HepG2 (cell line): ENCODE measurements at regions of chr19 and their contacts with region 1.

Region 1: DNA sequence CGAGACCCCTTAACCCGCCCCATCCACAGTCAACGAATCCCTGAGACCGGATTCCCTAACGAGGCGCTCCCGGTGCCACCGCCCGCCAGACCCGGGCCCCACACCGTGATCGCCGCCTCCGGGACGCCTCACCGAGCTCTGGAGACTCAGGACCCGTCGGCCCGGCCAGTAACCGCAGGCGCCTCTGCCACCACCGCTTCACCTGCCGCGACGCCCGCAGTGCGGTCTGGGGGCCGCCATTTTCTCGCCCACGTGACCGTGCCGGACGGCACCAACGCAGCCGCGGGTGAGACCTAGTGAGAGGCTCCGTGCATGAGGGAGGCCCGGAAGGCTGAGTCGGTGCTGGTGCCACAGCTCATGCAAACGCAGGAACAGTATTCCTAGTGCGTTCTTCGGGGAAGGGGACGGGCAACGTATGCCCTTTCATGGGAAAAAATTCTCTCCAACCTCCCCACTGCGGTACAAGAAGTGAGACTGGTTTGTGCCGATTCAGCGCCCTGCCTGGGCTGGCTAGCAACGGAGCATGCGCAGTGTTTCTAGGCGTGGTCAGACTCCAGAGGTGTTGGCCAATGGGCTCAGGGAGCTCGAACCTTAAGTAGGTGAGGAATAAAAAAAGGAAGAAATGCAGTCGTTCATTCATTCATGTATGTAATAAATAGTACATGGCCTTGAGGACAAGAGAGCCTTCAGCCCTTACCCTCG is at the start of gene DOHH:
- DNase-seq: peak; percentile 94
- ATAC-seq: peak; percentile 88
- H3K4me3 ChIP-seq: peak within 1 kb of the TSS; percentile 82 to 97 (median 89)
- H3K27ac ChIP-seq: peak within 1 kb of the TSS; percentile 97
- H3K4me1 ChIP-seq: peaks cover 69% of the 10 kb centered on the region
- H3K27me3 ChIP-seq: no peaks in the 10 kb centered on the region; a peak in 2 of 5 replicates
- CTCF ChIP-seq: no peak
- EP300 ChIP-seq: peak in 1 of 2 experiments; percentile 5; a peak in 1 of 4 replicates
- POLR2A ChIP-seq: peak; percentile 81 to 83
- RAD21 ChIP-seq: peak; percentile 33; the same call in 1 of the 2 replicates
- total RNA-seq, gene DOHH: 10.3 and 13.7 TPM in 2 replicates

Region 2: GRCh38 chr19:3479177-3479833 is 21.3 kb before region 1 on chr19:
- CTCF ChIA-PET with region 1: no interaction called
- POLR2A ChIA-PET with region 1: interaction called, 24 read pairs
- in situ Hi-C with region 1: no loop called
- intact Hi-C with region 1: no loop called
- DNase-seq: no peak
- ATAC-seq: no peak
- H3K4me3 ChIP-seq: no peak overlapping the region
- H3K27ac ChIP-seq: no peak overlapping the region
- H3K4me1 ChIP-seq: peaks cover 22% of the 10 kb centered on the region
- H3K27me3 ChIP-seq: no peaks in the 10 kb centered on the region
- CTCF ChIP-seq: no peak
- EP300 ChIP-seq: no peak
- POLR2A ChIP-seq: no peak
- RAD21 ChIP-seq: no peak

Region 3: DNA sequence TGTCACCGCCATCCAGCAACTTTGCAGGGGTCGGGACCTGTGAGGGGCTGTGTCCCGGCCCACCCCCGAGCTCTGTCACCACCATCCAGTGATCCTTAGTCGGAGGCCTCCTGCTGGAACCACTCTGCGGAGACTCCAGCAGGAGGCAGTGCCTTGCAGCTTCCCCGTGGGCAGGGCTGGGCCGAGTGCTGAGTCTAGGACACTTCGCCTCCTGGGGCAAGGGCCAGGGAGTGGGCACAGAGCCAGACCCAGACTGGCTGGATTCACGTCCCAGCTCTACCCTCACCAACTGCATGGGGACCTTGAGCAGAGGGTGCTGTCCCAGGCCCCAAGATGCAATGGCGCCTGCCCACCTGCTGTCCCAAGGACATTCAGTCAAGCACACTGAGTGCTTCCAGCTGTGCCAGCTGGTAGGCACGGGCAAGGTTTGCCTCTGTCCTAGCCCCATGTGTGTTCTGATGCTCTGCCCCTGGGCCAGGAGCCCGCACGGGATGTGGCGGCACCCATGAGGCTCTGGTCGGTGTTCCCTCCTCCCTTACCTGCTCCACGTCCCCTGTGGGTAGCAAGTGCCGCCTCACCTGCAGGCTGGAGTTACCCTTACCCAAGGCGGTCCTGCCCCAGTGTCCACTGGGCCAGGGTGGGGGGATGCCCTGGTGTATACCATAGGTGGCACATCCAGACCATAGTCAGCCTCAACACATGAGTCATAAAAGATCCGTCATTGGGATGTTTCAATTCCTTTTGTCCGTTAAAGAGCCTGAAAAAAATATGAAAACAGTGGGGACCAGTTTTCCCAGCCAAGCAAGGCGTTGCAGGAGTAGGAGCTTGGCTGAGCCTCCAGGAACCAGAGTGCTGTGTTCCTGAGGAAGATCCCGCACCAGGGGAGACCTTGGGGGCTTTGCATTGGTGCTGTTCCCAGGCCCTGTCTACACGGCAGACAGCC is 12.9 kb after region 1 on chr19:
- CTCF ChIA-PET with region 1: no interaction called
- POLR2A ChIA-PET with region 1: no interaction called
- in situ Hi-C with region 1: no loop called
- intact Hi-C with region 1: no loop called
- DNase-seq: no peak
- ATAC-seq: no peak
- H3K4me3 ChIP-seq: no peak overlapping the region
- H3K27ac ChIP-seq: no peak overlapping the region
- H3K4me1 ChIP-seq: peaks cover 17% of the 10 kb centered on the region
- H3K27me3 ChIP-seq: no peaks in the 10 kb centered on the region
- CTCF ChIP-seq: no peak
- EP300 ChIP-seq: no peak
- POLR2A ChIP-seq: no peak
- RAD21 ChIP-seq: no peak

Region 4: DNA sequence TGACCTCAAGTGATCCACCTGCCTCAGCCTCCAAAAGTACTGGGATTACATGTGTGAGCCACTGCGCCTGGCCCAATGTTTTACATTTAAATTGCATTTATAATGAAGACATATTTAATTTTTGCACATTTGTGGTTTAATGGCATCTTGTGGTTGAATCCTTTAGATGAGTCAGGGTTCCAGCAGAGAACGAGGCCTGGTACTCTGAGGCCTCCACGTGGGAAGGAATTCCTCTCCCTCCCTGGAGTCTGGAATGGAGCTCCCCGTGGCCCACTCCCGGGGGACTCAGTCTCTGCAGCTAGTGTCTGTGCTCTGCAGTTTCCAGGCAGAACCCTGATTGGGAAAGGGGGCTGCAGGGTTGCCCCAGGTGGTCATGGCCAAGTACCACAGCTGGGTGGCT is 344.0 kb after region 1 on chr19:
- CTCF ChIA-PET with region 1: no interaction called
- POLR2A ChIA-PET with region 1: no interaction called
- in situ Hi-C with region 1: no loop called
- intact Hi-C with region 1: no loop called
- DNase-seq: no peak
- ATAC-seq: no peak
- H3K4me3 ChIP-seq: no peak overlapping the region
- H3K27ac ChIP-seq: no peak overlapping the region
- H3K4me1 ChIP-seq: peaks cover 14% of the 10 kb centered on the region
- H3K27me3 ChIP-seq: peaks cover 1 to 6% of the 10 kb centered on the region in 2 experiments; a peak in 3 of 5 replicates
- CTCF ChIP-seq: no peak
- EP300 ChIP-seq: no peak
- POLR2A ChIP-seq: no peak
- RAD21 ChIP-seq: no peak